GM10248 (cell line): ENCODE measurements at regions of chr20 and their contacts with region 1.

Region 1: DNA sequence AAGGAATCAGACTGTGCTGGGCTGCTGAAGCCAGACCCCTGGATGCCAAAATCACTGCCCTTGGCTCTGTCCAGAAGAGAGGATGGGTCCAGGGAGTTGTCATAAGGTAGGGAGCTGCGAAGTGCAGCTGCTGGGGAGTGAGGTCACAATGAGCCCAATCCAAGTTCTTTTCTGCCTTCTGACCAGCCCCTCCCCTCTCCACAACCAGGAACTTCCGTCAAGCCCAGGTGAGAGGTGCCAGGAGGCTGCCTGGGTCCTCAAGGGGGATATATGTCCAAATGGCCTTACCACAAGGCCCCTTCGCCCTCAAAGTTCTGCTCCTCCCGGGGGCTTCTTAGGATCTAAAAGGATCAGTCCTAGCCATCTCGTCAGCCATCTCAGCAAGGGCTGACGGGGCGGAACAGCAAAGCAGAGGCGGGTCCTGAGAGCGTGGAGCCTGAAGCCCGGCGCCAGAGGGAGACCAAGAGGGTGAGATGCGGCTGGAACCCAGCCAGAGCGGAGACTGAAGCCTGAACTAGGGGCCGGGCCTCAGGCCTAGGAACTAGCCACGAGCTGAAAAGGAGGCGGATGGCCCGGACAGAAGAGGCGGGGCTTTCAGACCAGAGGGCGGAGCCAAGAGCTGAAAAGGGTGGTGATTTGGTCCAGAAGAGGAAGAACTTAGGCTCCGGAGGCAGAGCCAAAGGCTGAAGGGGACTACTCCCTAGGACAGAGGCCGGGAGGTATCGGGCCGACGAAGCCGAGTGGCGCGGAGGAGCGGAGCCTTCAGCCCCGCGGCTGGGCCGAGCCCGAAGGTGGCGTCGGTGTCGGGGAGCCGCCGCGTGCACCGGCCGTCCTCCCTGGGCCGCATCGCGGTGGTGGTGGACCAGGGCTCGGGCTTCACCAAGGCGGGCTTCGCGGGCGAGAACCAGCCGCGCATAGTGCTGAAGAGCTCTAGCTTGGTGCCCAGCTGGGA is at the start of gene ACTL10:
- DNase-seq: peak; percentile 94
- CTCF ChIP-seq: peak; percentile 40

Region 2: DNA sequence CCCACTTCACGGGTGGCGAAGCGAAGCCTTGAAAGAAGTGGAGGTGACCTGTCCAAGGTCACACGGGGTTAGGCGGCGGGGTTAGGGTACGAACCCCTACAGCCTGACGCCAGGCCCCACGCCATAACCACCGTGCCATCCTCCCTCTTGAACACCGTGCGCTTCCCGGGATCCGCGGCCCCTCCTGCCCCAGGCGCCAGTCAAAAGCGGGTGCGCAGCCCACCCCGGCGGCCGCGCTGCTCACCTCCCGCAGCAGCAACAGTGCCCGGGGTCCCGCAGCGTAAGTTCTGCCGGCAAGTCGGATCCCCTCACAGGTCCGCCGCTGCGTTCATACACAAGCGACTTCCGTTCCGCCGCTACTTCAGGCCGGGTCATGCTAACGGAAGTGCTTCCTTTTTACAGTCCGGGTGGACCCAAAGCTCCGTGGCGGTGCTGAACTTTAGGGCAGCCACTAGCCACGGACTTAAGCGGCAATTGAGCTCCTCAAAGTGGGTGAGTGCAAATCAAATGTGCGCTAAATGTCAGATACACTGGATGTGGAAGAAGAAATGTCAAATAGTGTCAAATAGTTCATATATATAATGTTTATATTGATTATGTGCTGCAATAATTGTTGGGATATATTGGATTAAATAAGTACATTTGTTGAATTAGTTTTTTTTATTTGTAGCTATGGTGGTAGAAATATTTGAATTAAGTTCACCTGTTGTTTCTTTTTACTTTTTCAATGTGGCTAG is 265.2 kb before region 1 on chr20 and contains the start of gene CDK5RAP1:
- CTCF ChIA-PET with region 1: interaction called, 16 read pairs
- POLR2A ChIA-PET with region 1: no interaction called
- DNase-seq: peak; percentile 87
- CTCF ChIP-seq: no peak

Region 3: DNA sequence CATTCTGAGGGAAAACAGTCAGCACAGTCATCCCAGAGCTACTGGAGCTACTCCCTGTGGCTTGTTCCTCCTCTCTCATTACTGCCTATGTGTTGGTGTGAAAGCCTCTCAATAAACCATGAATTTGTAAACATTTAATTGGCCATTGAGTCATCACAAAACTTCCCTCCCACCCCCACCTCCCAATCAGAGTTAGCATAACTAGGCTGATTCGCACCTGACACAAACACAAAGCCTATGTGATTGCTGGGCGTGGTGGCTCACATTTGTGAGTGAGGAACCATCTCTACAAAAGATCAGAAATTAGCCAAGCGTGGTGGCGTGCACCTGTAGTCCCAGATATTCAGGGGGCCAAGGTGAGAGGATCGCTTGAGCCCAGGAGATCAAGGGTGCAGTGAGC is 205.9 kb before region 1 on chr20:
- CTCF ChIA-PET with region 1: interaction called, 50 read pairs
- POLR2A ChIA-PET with region 1: interaction called, 3 read pairs
- DNase-seq: no peak
- CTCF ChIP-seq: no peak

Region 4: DNA sequence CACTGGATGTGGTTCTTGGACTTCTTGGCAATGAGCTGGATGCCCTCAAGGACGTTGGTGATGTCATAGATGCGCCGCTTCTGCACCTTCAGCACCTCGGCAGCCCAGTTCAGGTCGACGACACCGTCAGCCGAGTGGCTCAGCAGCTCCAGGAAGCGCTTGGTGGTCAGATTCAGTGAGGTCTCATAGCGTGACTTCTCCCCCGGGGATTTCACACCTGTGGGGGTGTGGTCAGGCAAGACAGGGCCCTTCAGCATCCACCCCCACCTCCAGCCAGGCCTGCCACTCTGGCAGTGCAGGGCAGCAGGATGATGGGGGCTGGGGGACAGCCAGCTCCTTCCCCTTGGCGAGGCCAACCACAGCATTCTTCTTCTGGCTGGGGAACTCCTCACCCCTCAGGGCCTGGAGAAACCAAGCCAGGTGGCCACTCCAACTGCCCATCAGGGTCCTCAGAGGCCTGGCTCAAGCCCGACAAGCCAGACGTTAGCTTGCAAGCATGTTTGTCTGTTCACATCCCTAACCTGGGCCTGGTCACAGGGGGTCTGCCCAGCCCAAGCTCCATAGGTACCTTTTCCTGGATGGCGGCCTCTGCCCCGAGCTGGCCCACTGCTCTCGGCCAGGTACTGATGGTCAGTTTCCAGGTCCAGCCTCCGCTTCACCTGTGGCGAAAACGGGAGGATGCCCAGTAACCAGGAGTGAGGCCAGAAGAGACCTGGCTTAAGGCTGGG is 13.4 kb after region 1 on chr20:
- CTCF ChIA-PET with region 1: interaction called, 61 read pairs
- POLR2A ChIA-PET with region 1: interaction called, 5 read pairs
- DNase-seq: peak; percentile 81
- CTCF ChIP-seq: no peak